ENCODE measurements at regions of chr10 and their contacts with region 1.

Region 1: DNA sequence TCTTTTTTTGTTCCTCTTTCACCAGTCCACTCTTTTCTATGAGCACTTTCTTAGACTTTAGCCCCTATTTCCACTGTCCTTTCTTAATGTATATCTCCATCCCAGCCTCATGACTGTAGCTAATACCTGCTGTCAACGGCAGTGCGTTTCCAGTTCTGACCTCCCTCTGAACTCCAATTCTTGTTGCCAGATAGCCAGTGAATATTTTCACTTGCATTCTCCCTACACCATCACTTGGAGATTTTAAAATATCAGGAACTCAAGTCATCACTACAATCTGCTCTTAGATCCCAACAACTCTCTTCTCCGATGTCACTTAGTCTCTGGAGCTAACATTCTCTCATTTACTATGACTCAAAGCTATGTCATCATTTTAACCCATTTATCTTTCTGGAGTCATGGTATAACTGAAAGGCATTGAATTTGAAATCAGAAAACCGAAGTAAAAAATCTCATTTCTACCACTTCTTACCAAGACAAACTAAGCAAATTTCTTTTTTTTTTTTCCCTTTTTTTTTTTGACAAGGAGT is 5.1 kb upstream of the SLC16A12 start:
- DNase-seq: no peak
- H3K4me3 ChIP-seq: no peak overlapping the region
- H3K27me3 ChIP-seq: peaks cover 5% of the 10 kb centered on the region
- CTCF ChIP-seq: no peak

Region 2: GRCh38 chr10:88450201-88450600 is 1090.3 kb before region 1 on chr10:
- CTCF ChIA-PET with region 1: no interaction called
- POLR2A ChIA-PET with region 1: no interaction called
- DNase-seq: no peak
- H3K4me3 ChIP-seq: no peak overlapping the region
- H3K27me3 ChIP-seq: no peaks in the 10 kb centered on the region
- CTCF ChIP-seq: no peak

Region 3: DNA sequence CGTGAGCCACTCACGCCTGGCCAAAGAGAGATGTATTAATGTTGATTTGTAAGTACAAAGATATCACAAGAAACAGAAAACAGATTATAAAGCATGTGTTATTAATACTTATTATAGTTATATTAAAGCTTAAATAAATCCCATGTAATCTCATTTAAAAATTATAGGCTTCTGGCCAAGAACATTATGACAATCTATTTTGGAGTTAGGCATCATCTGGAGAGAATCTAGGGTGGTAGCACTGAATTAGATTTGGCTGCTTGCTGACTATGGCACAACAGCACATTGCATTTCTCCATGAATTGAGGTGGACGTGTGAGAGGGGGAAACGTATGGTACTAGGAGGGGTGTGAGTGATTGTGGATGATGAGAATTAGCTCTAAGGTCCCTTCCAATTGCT is 11.7 kb after region 1 on chr10:
- CTCF ChIA-PET with region 1: interaction called, 6 read pairs
- POLR2A ChIA-PET with region 1: interaction called, 15 read pairs
- DNase-seq: no peak
- H3K4me3 ChIP-seq: no peak overlapping the region
- H3K27me3 ChIP-seq: no peaks in the 10 kb centered on the region; the same call in 1 of the 2 replicates
- CTCF ChIP-seq: no peak